ENCODE measurements at regions of chr5 and their contacts with region 1.

Region 1: GRCh38 chr5:150846654-150847333 is 473 bp downstream of the IRGM start:
- DNase-seq: peak; percentile 9 to 17
- ATAC-seq: peak; percentile 74 to 84
- H3K4me3 ChIP-seq: no peak overlapping the region
- H3K27ac ChIP-seq: no peak overlapping the region
- H3K4me1 ChIP-seq: peaks cover 0 to 3% of the 10 kb centered on the region in 2 donors
- H3K27me3 ChIP-seq: no peaks in the 10 kb centered on the region
- CTCF ChIP-seq: peak; percentile 33 to 68 (median 59)
- POLR2A ChIP-seq: no peak

Region 2: DNA sequence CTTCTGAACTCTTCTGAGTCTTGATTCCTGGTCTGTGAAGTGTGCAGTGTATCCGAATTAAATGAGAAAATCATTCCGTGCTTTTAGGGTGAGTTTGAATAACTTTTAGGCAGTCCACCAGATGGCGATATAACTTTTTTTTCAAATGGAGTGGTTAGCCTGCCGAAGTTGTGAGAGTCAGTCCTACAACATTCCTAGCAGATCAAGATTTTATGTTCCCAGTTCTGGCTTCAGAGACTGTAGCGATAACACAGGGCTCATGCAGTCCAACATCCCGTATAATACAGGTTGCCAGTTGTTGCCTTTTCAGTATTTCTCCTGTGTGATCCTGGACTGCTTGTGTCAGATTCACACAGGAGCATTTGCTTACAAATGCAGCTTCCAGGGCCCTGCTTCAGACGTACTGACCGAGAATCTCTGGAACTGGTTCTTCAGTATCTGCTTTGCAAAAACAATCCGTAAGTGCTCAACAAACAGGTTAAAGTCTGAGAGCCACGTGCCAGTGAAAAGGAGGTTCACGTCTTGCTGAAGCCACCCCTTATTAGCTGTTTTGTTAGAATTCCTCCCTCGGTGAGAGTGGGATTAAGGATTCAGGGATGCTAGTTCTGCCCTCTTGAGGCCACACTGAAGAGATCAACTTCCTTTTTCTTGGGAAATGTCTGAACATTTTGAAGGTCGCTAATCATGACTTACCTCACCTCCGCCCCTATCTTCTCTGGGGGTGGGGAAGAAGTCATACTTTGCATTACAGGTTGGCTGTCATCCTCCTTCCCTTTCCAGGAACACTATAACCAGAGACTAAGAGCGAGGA is 45.5 kb before region 1 on chr5:
- in situ Hi-C with region 1: loop called in 1 of 4 experiments (anchors 5 kb)
- intact Hi-C with region 1: loop called (anchors 2 kb)
- DNase-seq: no peak
- ATAC-seq: peak; percentile 80 to 93
- H3K4me3 ChIP-seq: peak overlapping the region; percentile 13 to 29 (median 20)
- H3K27ac ChIP-seq: peak overlapping the region; percentile 14 to 30 (median 26)
- H3K4me1 ChIP-seq: peaks cover 0 to 3% of the 10 kb centered on the region in 2 donors
- H3K27me3 ChIP-seq: no peaks in the 10 kb centered on the region
- CTCF ChIP-seq: peak; percentile 31 to 55 (median 45)
- POLR2A ChIP-seq: no peak

Region 3: DNA sequence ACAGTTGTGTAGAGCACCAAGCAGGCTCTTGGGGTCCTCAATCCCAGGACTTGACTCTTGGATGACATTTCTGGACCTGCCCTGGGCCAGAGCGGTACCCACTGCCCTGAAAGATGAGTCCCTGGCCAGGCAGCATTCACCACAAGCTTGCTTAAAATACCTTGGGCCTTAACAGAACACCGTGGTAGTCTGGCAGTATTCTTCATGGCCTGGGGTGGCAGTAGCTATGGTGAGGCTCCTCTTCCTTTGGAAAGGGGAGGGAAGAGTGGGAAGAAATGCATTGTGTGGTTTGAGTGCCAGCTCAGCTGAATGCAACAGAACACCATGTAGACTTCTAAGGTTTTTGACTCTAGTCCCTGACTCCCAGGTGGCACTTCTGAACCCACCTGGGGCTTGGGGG is 29.8 kb before region 1 on chr5:
- in situ Hi-C with region 1: no loop called
- intact Hi-C with region 1: loop called (anchors 1 kb)
- DNase-seq: no peak
- ATAC-seq: no peak
- H3K4me3 ChIP-seq: no peak overlapping the region
- H3K27ac ChIP-seq: no peak overlapping the region
- H3K4me1 ChIP-seq: no peaks in the 10 kb centered on the region
- H3K27me3 ChIP-seq: no peaks in the 10 kb centered on the region
- CTCF ChIP-seq: no peak
- POLR2A ChIP-seq: no peak